Left colon (tissue), 2 donors: ENCODE measurements at regions of chr16 and their contacts with region 1.

Region 1: DNA sequence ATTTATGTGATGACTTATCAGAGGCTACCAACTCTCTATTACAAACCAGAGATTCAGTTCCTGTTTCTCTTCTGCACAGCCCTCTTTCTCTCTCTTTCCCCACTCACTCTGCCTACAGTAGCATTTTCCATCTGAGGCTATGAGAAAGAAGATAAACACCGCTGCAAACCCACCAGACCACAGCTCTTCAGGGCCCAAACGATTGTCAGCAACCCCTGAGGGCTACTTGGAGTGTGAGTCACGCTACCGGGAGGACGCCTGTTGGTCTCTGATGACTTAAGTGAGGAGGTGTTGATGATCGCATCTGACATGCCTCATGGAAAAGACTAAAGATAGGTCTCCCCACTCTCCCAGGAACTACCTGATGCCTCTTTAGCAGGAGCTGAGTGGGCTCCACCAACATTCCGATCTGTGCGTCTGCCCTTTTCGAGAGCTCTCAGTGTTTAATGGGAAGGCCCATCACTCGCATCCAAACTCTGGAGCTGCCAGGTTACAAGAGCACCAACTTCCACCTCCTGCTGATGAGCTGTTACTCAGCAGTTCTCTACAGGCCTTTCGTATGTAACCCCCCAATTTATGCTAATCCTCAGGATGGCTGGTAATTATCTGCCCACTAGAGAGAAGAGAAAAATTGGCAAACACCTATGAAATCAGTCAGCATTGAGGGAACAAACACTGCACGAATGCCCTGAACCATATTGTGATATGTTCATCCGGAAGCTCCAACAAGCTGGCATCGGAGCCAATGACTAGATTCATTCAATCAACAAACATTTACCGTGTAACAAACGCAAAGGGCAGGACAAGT is 9.2 kb downstream of the GRIN2A start:
- DNase-seq: no peak
- ATAC-seq: no peak

Region 2: GRCh38 chr16:9647981-9648712 is 524.9 kb before region 1 on chr16:
- intact Hi-C with region 1: loop called in 1 of 2 experiments (anchors 10 kb)
- DNase-seq: no peak
- ATAC-seq: peak; percentile 84

Region 3: GRCh38 chr16:9787717-9788116 is 385.3 kb before region 1 on chr16:
- intact Hi-C with region 1: no loop called
- DNase-seq: no peak
- ATAC-seq: no peak

Region 4: DNA sequence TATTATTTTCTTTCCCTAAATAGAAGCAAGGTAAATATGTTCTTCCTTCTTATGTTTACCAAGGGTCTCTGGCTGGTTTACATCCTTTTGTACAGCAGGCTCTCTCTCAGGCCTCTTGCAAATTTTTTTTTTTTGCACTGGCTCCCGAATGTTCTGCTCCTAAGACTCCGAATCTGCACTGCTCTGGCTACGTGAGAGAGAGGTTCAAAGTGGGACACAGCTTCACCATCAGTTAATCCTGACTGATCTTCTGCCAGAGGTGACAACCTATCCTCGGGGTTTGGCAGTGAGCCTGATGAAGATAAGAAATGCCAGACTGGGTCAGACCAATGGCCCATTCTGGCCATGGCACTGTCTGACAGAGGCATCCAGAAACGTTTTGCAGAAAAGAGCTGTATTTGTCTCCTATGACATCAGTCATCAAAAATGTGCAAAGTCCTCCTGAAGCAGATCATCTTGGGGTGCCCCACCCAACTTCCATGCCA is 127.7 kb before region 1 on chr16:
- intact Hi-C with region 1: no loop called
- DNase-seq: no peak
- ATAC-seq: no peak